ENCODE measurements at regions of chr2 and their contacts with region 1.

Region 1: DNA sequence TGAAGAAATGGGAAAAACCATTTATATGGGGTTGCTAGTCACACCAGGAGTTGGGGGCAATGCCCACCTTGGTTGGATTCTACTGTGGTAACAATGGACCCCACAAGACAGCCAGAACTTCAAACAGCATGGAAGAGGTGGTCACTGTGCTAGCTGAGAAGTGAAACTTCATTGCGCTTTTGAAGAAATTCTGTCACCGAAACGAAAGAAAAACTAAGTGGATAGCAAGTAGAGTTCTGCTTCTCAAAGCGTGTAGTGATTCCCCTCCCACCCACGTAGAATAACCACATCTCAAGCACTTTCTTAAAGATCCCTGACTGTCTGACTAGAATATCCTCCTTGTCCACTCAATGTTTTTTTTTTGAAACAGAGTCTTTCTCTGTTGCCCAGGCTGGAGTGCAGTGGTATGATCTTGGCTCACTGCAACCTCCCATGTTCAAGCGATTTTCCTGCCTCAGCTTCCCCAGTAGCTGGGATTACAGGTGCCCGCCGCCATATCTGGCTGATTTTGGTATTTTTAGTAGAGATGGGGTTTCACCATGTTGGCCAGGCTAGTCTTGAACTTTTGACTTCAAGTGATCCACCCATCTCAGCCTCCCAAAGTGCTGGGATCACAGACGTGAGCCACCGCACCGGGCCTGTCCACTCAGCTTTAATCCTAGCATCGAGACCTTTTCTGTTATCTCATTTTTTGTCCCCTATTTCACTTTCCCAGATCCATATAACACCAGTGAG is 30.1 kb upstream of the CCL20 start:
- DNase-seq: peak; percentile 62 to 76 (median 65)
- H3K4me3 ChIP-seq: peak overlapping the region; percentile 55 to 94 (median 85)
- H3K4me3 Mint-ChIP-seq: peak overlapping the region; percentile 90 to 99
- H3K27ac ChIP-seq: peak overlapping the region; percentile 61 to 92
- H3K27ac Mint-ChIP-seq: peak overlapping the region; percentile 95 to 99 (median 97)
- H3K4me1 ChIP-seq: peaks cover 21 to 30% of the 10 kb centered on the region in 2 donors
- H3K4me1 Mint-ChIP-seq: peaks cover 31% of the 10 kb centered on the region
- H3K27me3 ChIP-seq: no peaks in the 10 kb centered on the region
- H3K27me3 Mint-ChIP-seq: peaks cover under 1 to 9% (median 8%) of the 10 kb centered on the region in 3 donors
- CTCF ChIP-seq: no peak

Region 2: GRCh38 chr2:227198866-227199265 is 584.7 kb before region 1 on chr2:
- intact Hi-C with region 1: no loop called
- DNase-seq: no peak
- H3K4me3 ChIP-seq: no peak overlapping the region
- H3K4me3 Mint-ChIP-seq: no peak overlapping the region
- H3K27ac ChIP-seq: no peak overlapping the region
- H3K27ac Mint-ChIP-seq: no peak overlapping the region
- H3K4me1 ChIP-seq: no peaks in the 10 kb centered on the region
- H3K4me1 Mint-ChIP-seq: no peaks in the 10 kb centered on the region
- H3K27me3 ChIP-seq: no peaks in the 10 kb centered on the region
- H3K27me3 Mint-ChIP-seq: peaks cover 0 to 3% (median 0%) of the 10 kb centered on the region in 3 donors
- CTCF ChIP-seq: no peak

Region 3: GRCh38 chr2:227817850-227818674 is 34.5 kb after region 1 on chr2:
- intact Hi-C with region 1: loop called in 1 of 2 experiments (anchors 5 kb)
- DNase-seq: peak; percentile 98 to 100 (median 100)
- H3K4me3 ChIP-seq: peak overlapping the region in 1 of 3 experiments; percentile 45
- H3K4me3 Mint-ChIP-seq: peak overlapping the region in 1 of 2 donors; percentile 80
- H3K27ac ChIP-seq: peak overlapping the region; percentile 86 to 95
- H3K27ac Mint-ChIP-seq: peak overlapping the region; percentile 96 to 99 (median 98)
- H3K4me1 ChIP-seq: peaks cover 39 to 43% of the 10 kb centered on the region in 2 donors
- H3K4me1 Mint-ChIP-seq: peaks cover 47% of the 10 kb centered on the region
- H3K27me3 ChIP-seq: no peaks in the 10 kb centered on the region
- H3K27me3 Mint-ChIP-seq: peaks cover 4 to 9% (median 7%) of the 10 kb centered on the region in 3 donors
- CTCF ChIP-seq: no peak

Region 4: DNA sequence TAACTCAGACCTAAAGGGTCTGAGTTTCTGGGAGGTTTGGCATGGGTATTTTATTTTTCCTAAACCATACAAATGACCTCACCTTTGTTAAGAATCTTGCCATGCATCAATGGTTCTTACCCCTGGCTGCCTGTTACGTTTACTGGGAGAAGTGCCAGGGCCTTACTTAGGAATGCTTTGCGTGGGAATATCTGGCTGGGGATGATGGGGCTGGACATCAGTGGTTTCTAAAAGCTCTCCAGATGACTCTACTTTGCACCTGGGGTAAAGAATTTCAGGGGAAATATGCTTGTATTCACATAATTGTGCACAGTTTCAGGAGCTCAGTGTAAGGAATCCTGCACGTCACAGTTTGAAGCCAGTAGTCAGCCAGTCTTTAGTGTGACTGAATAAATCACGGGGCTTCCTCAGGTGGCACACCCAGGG is 69.6 kb after region 1 on chr2:
- intact Hi-C with region 1: loop called in 1 of 2 experiments (anchors 10 kb)
- DNase-seq: no peak
- H3K4me3 ChIP-seq: no peak overlapping the region
- H3K4me3 Mint-ChIP-seq: no peak overlapping the region
- H3K27ac ChIP-seq: no peak overlapping the region
- H3K27ac Mint-ChIP-seq: no peak overlapping the region
- H3K4me1 ChIP-seq: peaks cover 5 to 7% of the 10 kb centered on the region in 2 donors
- H3K4me1 Mint-ChIP-seq: peaks cover 8% of the 10 kb centered on the region
- H3K27me3 ChIP-seq: peaks cover 2 to 11% of the 10 kb centered on the region in 2 donors
- H3K27me3 Mint-ChIP-seq: peaks cover 11 to 21% (median 17%) of the 10 kb centered on the region in 3 donors
- CTCF ChIP-seq: no peak

Region 5: DNA sequence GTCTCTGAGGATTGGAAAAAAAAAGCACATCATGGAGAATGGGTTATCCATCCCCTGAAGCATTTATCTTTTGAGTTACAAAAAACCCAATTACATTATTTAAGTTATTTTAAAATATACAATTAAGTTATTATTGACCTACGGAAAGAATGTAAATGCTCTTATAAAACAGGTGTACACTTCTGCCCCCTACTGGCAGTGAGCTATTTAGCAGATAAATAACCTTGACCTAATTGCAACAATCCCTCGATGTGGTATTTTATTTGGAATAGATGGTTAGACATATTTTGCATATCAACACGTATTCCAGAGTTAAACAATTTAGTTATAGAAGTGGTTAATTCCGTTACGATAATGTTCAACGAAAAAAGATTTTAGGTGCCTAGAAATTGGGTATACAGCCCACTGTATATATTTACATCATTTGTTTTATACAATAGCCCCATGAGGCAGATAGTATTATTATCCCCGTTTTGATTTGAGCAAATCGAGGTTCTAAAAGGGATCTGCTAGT is 78.7 kb after region 1 on chr2:
- intact Hi-C with region 1: loop called (anchors 5 to 10 kb)
- DNase-seq: peak; percentile 40 to 71 (median 63)
- H3K4me3 ChIP-seq: no peak overlapping the region
- H3K4me3 Mint-ChIP-seq: no peak overlapping the region
- H3K27ac ChIP-seq: no peak overlapping the region
- H3K27ac Mint-ChIP-seq: no peak overlapping the region
- H3K4me1 ChIP-seq: peaks cover 3 to 4% of the 10 kb centered on the region in 2 donors
- H3K4me1 Mint-ChIP-seq: peaks cover 7% of the 10 kb centered on the region
- H3K27me3 ChIP-seq: no peaks in the 10 kb centered on the region
- H3K27me3 Mint-ChIP-seq: peaks cover 4 to 12% (median 8%) of the 10 kb centered on the region in 3 donors
- CTCF ChIP-seq: peak; percentile 89

Region 6: DNA sequence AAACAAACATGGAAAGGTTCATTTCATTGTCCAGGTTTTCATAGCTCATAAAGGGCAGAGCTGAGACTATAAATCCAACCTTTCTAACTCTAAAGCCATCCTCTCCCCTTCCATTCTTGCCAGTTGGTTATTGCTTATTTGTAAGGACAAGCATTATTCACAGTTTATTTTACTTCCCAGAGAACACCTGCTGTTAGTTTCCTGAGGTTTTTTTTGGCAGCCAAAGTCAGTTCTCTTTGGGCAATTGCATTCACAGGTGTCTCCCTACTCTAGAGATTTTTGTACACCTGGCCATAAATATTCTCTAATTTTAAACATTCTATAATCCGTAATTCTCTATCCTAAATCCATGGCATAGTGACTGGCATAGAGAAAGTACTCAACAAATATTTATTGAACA is 485.2 kb after region 1 on chr2:
- intact Hi-C with region 1: no loop called
- DNase-seq: no peak
- H3K4me3 ChIP-seq: no peak overlapping the region
- H3K4me3 Mint-ChIP-seq: no peak overlapping the region
- H3K27ac ChIP-seq: no peak overlapping the region
- H3K27ac Mint-ChIP-seq: no peak overlapping the region
- H3K4me1 ChIP-seq: no peaks in the 10 kb centered on the region
- H3K4me1 Mint-ChIP-seq: no peaks in the 10 kb centered on the region
- H3K27me3 ChIP-seq: no peaks in the 10 kb centered on the region
- H3K27me3 Mint-ChIP-seq: no peaks in the 10 kb centered on the region
- CTCF ChIP-seq: no peak